ENCODE measurements at regions of chr3 and their contacts with region 1.

Region 1: GRCh38 chr3:153032891-153033290 is 129.1 kb upstream of the RAP2B start:
- DNase-seq: no peak
- H3K4me3 ChIP-seq: no peak overlapping the region
- H3K27me3 ChIP-seq: no peaks in the 10 kb centered on the region
- CTCF ChIP-seq: no peak

Region 2: GRCh38 chr3:153043729-153044328 is 10.9 kb after region 1 on chr3:
- CTCF ChIA-PET with region 1: interaction called, 10 read pairs
- POLR2A ChIA-PET with region 1: no interaction called
- DNase-seq: no peak
- H3K4me3 ChIP-seq: no peak overlapping the region
- H3K27me3 ChIP-seq: no peaks in the 10 kb centered on the region
- CTCF ChIP-seq: no peak

Measured in BJ (cell line).